GM10248 (cell line): ENCODE measurements at regions of chr12 and their contacts with region 1.

Region 1: GRCh38 chr12:25213338-25213737 is 18.3 kb downstream of the ETFRF1 start:
- DNase-seq: no peak
- CTCF ChIP-seq: no peak

Region 2: GRCh38 chr12:25089738-25090137 is 123.6 kb before region 1 on chr12:
- CTCF ChIA-PET with region 1: no interaction called
- POLR2A ChIA-PET with region 1: no interaction called
- DNase-seq: no peak
- CTCF ChIP-seq: no peak

Region 3: GRCh38 chr12:25186788-25187397 is 26.4 kb before region 1 on chr12:
- CTCF ChIA-PET with region 1: no interaction called
- POLR2A ChIA-PET with region 1: no interaction called
- DNase-seq: peak; percentile 31
- CTCF ChIP-seq: no peak

Region 4: DNA sequence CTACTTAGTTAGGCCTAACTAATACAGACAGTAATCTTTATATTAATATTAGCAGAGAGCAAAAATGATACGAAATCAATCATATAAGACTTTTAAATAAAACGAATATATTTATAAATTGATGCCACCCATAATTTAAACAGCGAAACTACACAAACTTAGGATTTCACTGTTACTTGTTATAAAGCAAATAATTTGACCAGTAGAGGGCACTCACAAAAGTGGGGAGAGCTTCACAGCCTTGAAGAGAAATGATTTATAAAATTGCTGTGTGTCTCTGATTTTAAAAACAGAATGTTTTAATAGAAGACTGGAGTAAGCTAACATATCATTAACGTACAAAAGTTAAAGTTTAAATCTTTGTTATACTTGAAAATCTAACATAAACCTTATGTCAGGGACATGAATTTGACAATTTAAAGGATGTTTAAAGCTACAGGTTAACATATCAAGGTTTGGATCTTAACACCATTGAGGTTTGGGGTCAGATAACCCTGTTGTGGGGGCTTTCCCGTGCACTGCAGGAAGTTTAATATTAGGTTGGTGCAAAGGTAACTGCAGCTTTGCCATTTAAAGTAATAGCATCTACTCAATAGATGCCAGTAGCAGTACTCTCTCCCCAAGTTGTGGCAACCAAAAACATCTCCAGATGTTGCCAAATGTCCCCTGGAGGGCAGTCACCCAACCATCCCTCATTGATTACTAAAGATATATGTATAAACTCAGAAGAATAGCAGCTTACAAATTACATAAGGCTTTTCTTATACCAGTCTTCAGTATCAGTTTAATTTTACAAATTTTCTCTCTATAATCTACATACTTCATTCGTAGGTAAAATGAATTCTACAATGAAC is 28.1 kb after region 1 on chr12:
- CTCF ChIA-PET with region 1: interaction called, 17 read pairs
- POLR2A ChIA-PET with region 1: no interaction called
- DNase-seq: peak; percentile 31
- CTCF ChIP-seq: peak; percentile 49

Region 5: GRCh38 chr12:25377469-25378177 is 164.3 kb after region 1 on chr12:
- CTCF ChIA-PET with region 1: no interaction called
- POLR2A ChIA-PET with region 1: no interaction called
- DNase-seq: no peak
- CTCF ChIP-seq: no peak